Naive thymus-derived CD4-positive, alpha-beta T cell (primary cell): ENCODE measurements at regions of chr12 and their contacts with region 1.

Region 1: DNA sequence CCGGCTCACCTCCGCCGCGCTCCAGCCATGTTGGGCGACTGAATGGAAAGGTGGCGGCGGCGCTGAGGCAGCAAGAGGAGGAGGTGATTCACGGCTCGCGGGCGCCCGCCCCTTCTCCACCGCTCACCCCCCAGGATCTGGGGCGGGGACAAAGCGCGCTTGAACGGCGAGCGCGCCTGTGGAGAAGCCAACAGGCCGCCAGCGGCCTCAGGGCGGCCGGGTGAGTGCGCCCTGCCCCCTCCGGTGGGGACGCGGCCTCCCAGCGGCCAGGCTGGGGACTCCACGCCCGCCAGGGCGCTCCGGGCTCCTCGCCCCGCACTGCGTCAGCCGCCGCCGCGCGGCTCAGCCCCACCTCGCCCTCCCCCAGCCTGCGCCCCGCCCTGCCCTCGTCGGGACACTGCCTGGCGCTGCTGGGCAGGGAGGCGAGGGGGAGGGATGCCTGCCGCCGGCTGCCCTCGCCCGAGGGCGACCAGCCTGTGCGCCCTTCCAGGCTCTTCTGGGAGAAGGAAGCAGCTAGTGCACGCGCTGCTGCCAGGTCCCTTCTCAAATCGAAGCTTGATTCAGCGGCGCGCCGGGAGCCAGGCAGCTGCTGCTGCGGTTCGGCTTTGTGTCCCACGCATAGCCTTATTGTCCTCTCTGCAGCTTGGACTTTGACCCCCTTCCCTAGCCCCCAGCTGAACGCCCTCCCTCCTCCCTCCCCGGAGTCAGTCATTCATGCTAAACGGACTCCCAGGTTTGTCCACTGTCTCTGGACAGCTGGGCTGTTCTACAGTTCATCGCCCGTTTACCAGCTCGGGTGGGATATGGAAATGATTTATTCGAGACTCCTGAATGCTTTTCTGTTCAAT is at the start of gene KIF21A:
- DNase-seq: peak; percentile 71 to 91 (median 82)
- ATAC-seq: peak; percentile 93
- H3K4me3 ChIP-seq: peak within 1 kb of the TSS; percentile 75
- H3K4me3 Mint-ChIP-seq: peak within 1 kb of the TSS; percentile 86 to 98 (median 92)
- H3K27ac ChIP-seq: peak within 1 kb of the TSS; percentile 66
- H3K27ac Mint-ChIP-seq: peak within 1 kb of the TSS; percentile 79 to 97 (median 89)
- H3K4me1 ChIP-seq: peaks cover 9 to 10% of the 10 kb centered on the region in 2 donors
- H3K4me1 Mint-ChIP-seq: peaks cover 10 to 28% (median 13%) of the 10 kb centered on the region in 7 donors
- H3K27me3 ChIP-seq: no peaks in the 10 kb centered on the region
- H3K27me3 Mint-ChIP-seq: peaks cover 0 to 32% (median 4%) of the 10 kb centered on the region in 5 donors
- total RNA-seq, gene KIF21A: 5.0 to 12.0 (median 9.3) TPM

Region 2: GRCh38 chr12:38316391-38317129 is 1126.7 kb before region 1 on chr12 and contains the start of gene ALG10B:
- CTCF ChIA-PET with region 1: no interaction called
- POLR2A ChIA-PET with region 1: interaction called, 6 read pairs
- intact Hi-C with region 1: loop called (anchors 1 to 10 kb)
- DNase-seq: peak; percentile 86 to 96 (median 94)
- ATAC-seq: peak; percentile 99
- H3K4me3 ChIP-seq: peak within 1 kb of the TSS; percentile 95
- H3K4me3 Mint-ChIP-seq: peak within 1 kb of the TSS; percentile 92 to 98 (median 94)
- H3K27ac ChIP-seq: peak within 1 kb of the TSS; percentile 75
- H3K27ac Mint-ChIP-seq: peak within 1 kb of the TSS; percentile 96 to 99 (median 97)
- H3K4me1 ChIP-seq: peaks cover 0 to 13% of the 10 kb centered on the region in 2 donors
- H3K4me1 Mint-ChIP-seq: peaks cover 5 to 44% (median 35%) of the 10 kb centered on the region in 7 donors
- H3K27me3 ChIP-seq: no peaks in the 10 kb centered on the region
- H3K27me3 Mint-ChIP-seq: peaks cover 0 to 9% (median 0%) of the 10 kb centered on the region in 5 donors
- total RNA-seq, gene ALG10B: 10.5 to 17.1 (median 12.0) TPM

Region 3: DNA sequence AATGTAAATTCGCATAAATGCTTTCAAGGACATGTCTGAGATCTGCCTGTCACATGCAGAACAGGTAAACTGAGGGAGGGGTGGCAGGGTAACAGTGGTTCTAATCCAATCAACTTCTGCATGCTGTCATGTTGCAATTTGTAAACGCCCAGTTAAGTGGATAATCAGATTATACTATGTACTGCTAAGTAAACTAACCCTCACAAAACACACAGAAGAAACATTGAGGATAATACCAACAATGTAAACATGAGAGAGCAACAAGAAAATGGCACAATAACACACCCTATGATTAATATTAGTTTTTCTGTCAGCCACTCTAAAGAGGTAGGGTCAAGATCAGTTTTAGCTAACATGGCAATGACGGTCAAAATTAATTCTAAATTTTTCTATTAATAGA is 124.1 kb before region 1 on chr12:
- CTCF ChIA-PET with region 1: no interaction called
- POLR2A ChIA-PET with region 1: no interaction called
- intact Hi-C with region 1: loop called (anchors 2 kb)
- DNase-seq: no peak
- ATAC-seq: no peak
- H3K4me3 ChIP-seq: no peak overlapping the region
- H3K4me3 Mint-ChIP-seq: no peak overlapping the region
- H3K27ac ChIP-seq: no peak overlapping the region
- H3K27ac Mint-ChIP-seq: no peak overlapping the region
- H3K4me1 ChIP-seq: no peaks in the 10 kb centered on the region
- H3K4me1 Mint-ChIP-seq: peaks cover 0 to 5% (median 0%) of the 10 kb centered on the region in 7 donors
- H3K27me3 ChIP-seq: no peaks in the 10 kb centered on the region
- H3K27me3 Mint-ChIP-seq: no peaks in the 10 kb centered on the region

Region 4: GRCh38 chr12:39682689-39683477 is 239.6 kb after region 1 on chr12:
- CTCF ChIA-PET with region 1: no interaction called
- POLR2A ChIA-PET with region 1: no interaction called
- intact Hi-C with region 1: loop called in 1 of 2 experiments (anchors 5 kb)
- DNase-seq: peak in 6 of 9 donors; percentile 27 to 60 (median 44)
- ATAC-seq: peak; percentile 75
- H3K4me3 ChIP-seq: peak overlapping the region; percentile 30
- H3K4me3 Mint-ChIP-seq: peak overlapping the region; percentile 61 to 90 (median 83)
- H3K27ac ChIP-seq: peak overlapping the region; percentile 64
- H3K27ac Mint-ChIP-seq: peak overlapping the region; percentile 87 to 99 (median 96)
- H3K4me1 ChIP-seq: peaks cover 24 to 26% of the 10 kb centered on the region in 2 donors
- H3K4me1 Mint-ChIP-seq: peaks cover 16 to 45% (median 38%) of the 10 kb centered on the region in 7 donors
- H3K27me3 ChIP-seq: no peaks in the 10 kb centered on the region
- H3K27me3 Mint-ChIP-seq: no peaks in the 10 kb centered on the region

Region 5: GRCh38 chr12:39990122-39991101 is 547.1 kb after region 1 on chr12:
- CTCF ChIA-PET with region 1: no interaction called
- POLR2A ChIA-PET with region 1: no interaction called
- intact Hi-C with region 1: loop called in 1 of 2 experiments (anchors 5 kb)
- DNase-seq: peak; percentile 4 to 51 (median 42)
- ATAC-seq: peak; percentile 89
- H3K4me3 ChIP-seq: no peak overlapping the region
- H3K4me3 Mint-ChIP-seq: no peak overlapping the region
- H3K27ac ChIP-seq: no peak overlapping the region
- H3K27ac Mint-ChIP-seq: no peak overlapping the region
- H3K4me1 ChIP-seq: no peaks in the 10 kb centered on the region
- H3K4me1 Mint-ChIP-seq: peaks cover 0 to 7% (median 6%) of the 10 kb centered on the region in 7 donors
- H3K27me3 ChIP-seq: no peaks in the 10 kb centered on the region
- H3K27me3 Mint-ChIP-seq: no peaks in the 10 kb centered on the region

Region 6: GRCh38 chr12:40028301-40028700 is 585.0 kb after region 1 on chr12:
- CTCF ChIA-PET with region 1: no interaction called
- POLR2A ChIA-PET with region 1: no interaction called
- intact Hi-C with region 1: no loop called
- DNase-seq: no peak
- ATAC-seq: no peak
- H3K4me3 ChIP-seq: no peak overlapping the region
- H3K4me3 Mint-ChIP-seq: no peak overlapping the region
- H3K27ac ChIP-seq: no peak overlapping the region
- H3K27ac Mint-ChIP-seq: no peak overlapping the region
- H3K4me1 ChIP-seq: no peaks in the 10 kb centered on the region
- H3K4me1 Mint-ChIP-seq: peaks cover 0 to 12% (median 5%) of the 10 kb centered on the region in 7 donors
- H3K27me3 ChIP-seq: no peaks in the 10 kb centered on the region
- H3K27me3 Mint-ChIP-seq: no peaks in the 10 kb centered on the region